T-cell (primary cell): ENCODE measurements at regions of chr6 and their contacts with region 1.

Region 1: GRCh38 chr6:138422861-138423260 is 18.8 kb downstream of the HEBP2 start:
- DNase-seq: no peak
- ATAC-seq: no peak
- H3K4me3 ChIP-seq: no peak overlapping the region
- H3K4me3 Mint-ChIP-seq: no peak overlapping the region
- H3K27ac ChIP-seq: no peak overlapping the region
- H3K27ac Mint-ChIP-seq: no peak overlapping the region
- H3K4me1 ChIP-seq: no peaks in the 10 kb centered on the region
- H3K4me1 Mint-ChIP-seq: peaks cover 0 to 8% (median 3%) of the 10 kb centered on the region in 3 donors
- H3K27me3 ChIP-seq: no peaks in the 10 kb centered on the region
- H3K27me3 Mint-ChIP-seq: no peaks in the 10 kb centered on the region

Region 2: DNA sequence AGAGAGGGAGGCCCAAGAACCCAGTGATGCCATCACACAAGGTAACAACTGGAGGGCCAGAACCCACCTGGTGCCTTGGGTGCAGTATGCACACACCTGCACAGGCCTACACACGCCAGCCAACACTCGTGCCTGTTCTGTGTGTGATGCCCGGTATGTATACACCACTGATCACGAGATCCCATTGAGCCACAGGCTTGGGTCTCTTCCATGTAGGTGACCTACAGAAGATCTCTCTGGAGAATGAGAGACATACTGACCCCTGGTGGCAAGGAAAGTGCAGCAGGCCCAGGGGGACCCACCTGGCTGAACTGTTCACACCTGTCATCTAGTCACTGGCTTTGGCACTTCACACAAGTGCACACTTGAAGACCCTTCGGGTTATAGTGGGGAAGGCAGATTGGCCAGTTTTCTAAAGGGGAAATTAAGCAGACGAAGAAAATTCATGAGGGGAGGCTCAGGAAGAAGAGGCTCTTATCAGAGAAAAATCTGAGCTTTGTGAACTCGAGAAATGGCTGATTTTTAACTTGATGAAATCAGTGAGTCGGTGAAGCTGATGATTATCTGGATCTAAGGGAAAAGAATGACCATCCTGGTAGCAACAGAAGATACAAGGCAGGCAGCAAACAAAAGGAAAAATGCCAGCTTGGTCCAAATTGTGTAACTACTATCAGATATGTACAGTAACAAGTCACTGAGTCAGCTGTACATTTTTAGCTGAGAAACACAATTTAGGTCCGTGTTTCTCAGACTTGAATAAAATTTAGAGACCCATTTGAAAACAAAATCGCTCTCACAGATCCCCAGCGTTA is 135.5 kb before region 1 on chr6:
- CTCF ChIA-PET with region 1: interaction called in 1 of 2 experiments, 10 read pairs
- POLR2A ChIA-PET with region 1: no interaction called
- DNase-seq: peak in 30 of 35 experiments; percentile 5 to 62 (median 27)
- ATAC-seq: peak in 3 of 4 experiments; percentile 36 to 66 (median 46)
- H3K4me3 ChIP-seq: no peak overlapping the region
- H3K4me3 Mint-ChIP-seq: no peak overlapping the region
- H3K27ac ChIP-seq: no peak overlapping the region
- H3K27ac Mint-ChIP-seq: no peak overlapping the region
- H3K4me1 ChIP-seq: no peaks in the 10 kb centered on the region
- H3K4me1 Mint-ChIP-seq: no peaks in the 10 kb centered on the region
- H3K27me3 ChIP-seq: peaks cover 0 to 15% of the 10 kb centered on the region in 2 experiments
- H3K27me3 Mint-ChIP-seq: peaks cover 0 to 3% of the 10 kb centered on the region in 2 donors